ENCODE measurements at regions of chr21 and their contacts with region 1.

Region 1: GRCh38 chr21:42107881-42108553 is 36.9 kb downstream of the UMODL1 start:
- DNase-seq: peak; percentile 75
- ATAC-seq: peak; percentile 99
- H3K4me3 Mint-ChIP-seq: no peak overlapping the region
- H3K27ac Mint-ChIP-seq: no peak overlapping the region
- H3K4me1 Mint-ChIP-seq: peaks cover 5% of the 10 kb centered on the region
- H3K27me3 Mint-ChIP-seq: no peaks in the 10 kb centered on the region
- CTCF ChIP-seq: peak; percentile 90

Region 2: DNA sequence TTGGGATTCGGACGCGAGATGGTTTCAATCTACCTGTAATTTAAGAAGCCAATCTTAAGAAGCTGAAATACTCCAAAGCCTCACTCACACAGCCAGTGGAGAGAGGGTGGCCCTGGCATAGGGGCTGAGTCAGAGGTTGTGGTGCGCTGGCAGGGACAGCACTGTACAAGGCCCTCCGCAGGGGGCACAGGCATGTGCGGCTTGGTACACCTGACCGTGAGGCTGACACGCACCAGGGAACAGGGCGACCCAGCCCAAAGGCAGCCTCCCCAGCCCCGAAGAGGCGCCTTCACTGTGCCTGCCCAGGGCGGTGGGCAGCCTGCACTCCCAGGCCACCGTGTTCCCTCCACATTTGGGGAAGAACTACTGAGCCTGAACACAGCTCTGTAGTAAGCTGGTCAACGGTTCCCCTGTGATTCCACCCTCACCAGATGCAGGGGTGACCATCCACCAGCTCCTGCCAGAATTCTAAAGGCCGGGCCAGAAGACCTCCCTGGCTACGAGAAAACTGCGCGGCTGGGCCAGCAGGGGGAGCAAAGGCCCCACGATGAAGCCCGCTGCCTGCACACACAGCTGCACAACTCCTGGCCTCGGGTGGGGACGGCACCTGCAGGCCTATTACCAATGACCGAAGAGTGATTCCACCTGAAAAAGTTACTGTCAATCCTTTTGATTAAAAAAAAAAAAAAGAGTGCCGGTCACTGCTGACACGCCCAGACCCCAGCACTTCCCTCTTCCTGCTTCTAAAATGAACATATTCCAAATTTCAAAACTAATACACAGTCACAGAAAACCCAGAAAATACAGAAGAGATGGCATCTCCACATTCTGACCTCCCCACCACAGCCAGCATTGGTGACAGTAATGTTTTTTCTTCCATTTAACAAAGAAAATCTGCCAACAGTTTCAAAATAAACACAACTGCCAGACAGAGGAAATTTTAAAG is 291.5 kb before region 1 on chr21:
- CTCF ChIA-PET with region 1: interaction called, 40 read pairs
- POLR2A ChIA-PET with region 1: no interaction called
- intact Hi-C with region 1: no loop called
- DNase-seq: peak; percentile 67
- ATAC-seq: peak; percentile 90
- H3K4me3 Mint-ChIP-seq: no peak overlapping the region
- H3K27ac Mint-ChIP-seq: no peak overlapping the region
- H3K4me1 Mint-ChIP-seq: peaks cover 6% of the 10 kb centered on the region
- H3K27me3 Mint-ChIP-seq: no peaks in the 10 kb centered on the region
- CTCF ChIP-seq: peak; percentile 67

Region 3: GRCh38 chr21:42009831-42010523 is 98.0 kb before region 1 on chr21 and contains the start of gene ZBTB21:
- CTCF ChIA-PET with region 1: interaction called, 21 read pairs
- POLR2A ChIA-PET with region 1: no interaction called
- intact Hi-C with region 1: no loop called
- DNase-seq: peak; percentile 98
- ATAC-seq: peak; percentile 90
- H3K4me3 Mint-ChIP-seq: peak within 1 kb of the TSS; percentile 93
- H3K27ac Mint-ChIP-seq: peak within 1 kb of the TSS; percentile 99
- H3K4me1 Mint-ChIP-seq: peaks cover 28% of the 10 kb centered on the region
- H3K27me3 Mint-ChIP-seq: no peaks in the 10 kb centered on the region
- CTCF ChIP-seq: no peak
- total RNA-seq, gene ZBTB21: 29.6 to 29.7 TPM

Region 4: GRCh38 chr21:42056996-42057689 is 50.9 kb before region 1 on chr21:
- CTCF ChIA-PET with region 1: no interaction called
- POLR2A ChIA-PET with region 1: no interaction called
- intact Hi-C with region 1: no loop called
- DNase-seq: no peak
- ATAC-seq: no peak
- H3K4me3 Mint-ChIP-seq: no peak overlapping the region
- H3K27ac Mint-ChIP-seq: no peak overlapping the region
- H3K4me1 Mint-ChIP-seq: peaks cover 13% of the 10 kb centered on the region
- H3K27me3 Mint-ChIP-seq: no peaks in the 10 kb centered on the region
- CTCF ChIP-seq: no peak

Region 5: GRCh38 chr21:42073145-42074092 is 34.6 kb before region 1 on chr21:
- CTCF ChIA-PET with region 1: interaction called, 10 read pairs
- POLR2A ChIA-PET with region 1: no interaction called
- intact Hi-C with region 1: no loop called
- DNase-seq: no peak
- ATAC-seq: peak; percentile 24
- H3K4me3 Mint-ChIP-seq: no peak overlapping the region
- H3K27ac Mint-ChIP-seq: no peak overlapping the region
- H3K4me1 Mint-ChIP-seq: peaks cover 3% of the 10 kb centered on the region
- H3K27me3 Mint-ChIP-seq: no peaks in the 10 kb centered on the region
- CTCF ChIP-seq: peak; percentile 14

Region 6: GRCh38 chr21:42093991-42094421 is 14.0 kb before region 1 on chr21:
- CTCF ChIA-PET with region 1: interaction called, 16 read pairs
- POLR2A ChIA-PET with region 1: no interaction called
- intact Hi-C with region 1: no loop called
- DNase-seq: no peak
- ATAC-seq: no peak
- H3K4me3 Mint-ChIP-seq: no peak overlapping the region
- H3K27ac Mint-ChIP-seq: no peak overlapping the region
- H3K4me1 Mint-ChIP-seq: peaks cover 6% of the 10 kb centered on the region
- H3K27me3 Mint-ChIP-seq: no peaks in the 10 kb centered on the region
- CTCF ChIP-seq: no peak